CD4-positive, alpha-beta memory T cell (primary cell): ENCODE measurements at regions of chr15 and their contacts with region 1.

Region 1: GRCh38 chr15:74906446-74907162 is at the start of gene FAM219B:
- DNase-seq: peak; percentile 67 to 80 (median 68)
- H3K4me3 ChIP-seq: peak within 1 kb of the TSS; percentile 61 to 94
- H3K4me3 Mint-ChIP-seq: peak within 1 kb of the TSS; percentile 96 to 100 (median 99)
- H3K27ac ChIP-seq: peak within 1 kb of the TSS; percentile 83
- H3K27ac Mint-ChIP-seq: peak within 1 kb of the TSS; percentile 92 to 99 (median 98)
- H3K4me1 ChIP-seq: peaks cover 32% of the 10 kb centered on the region
- H3K4me1 Mint-ChIP-seq: peaks cover 25 to 52% (median 39%) of the 10 kb centered on the region in 4 donors
- H3K27me3 ChIP-seq: no peaks in the 10 kb centered on the region
- H3K27me3 Mint-ChIP-seq: no peaks in the 10 kb centered on the region
- total RNA-seq, gene FAM219B: 101 to 117 TPM

Region 2: DNA sequence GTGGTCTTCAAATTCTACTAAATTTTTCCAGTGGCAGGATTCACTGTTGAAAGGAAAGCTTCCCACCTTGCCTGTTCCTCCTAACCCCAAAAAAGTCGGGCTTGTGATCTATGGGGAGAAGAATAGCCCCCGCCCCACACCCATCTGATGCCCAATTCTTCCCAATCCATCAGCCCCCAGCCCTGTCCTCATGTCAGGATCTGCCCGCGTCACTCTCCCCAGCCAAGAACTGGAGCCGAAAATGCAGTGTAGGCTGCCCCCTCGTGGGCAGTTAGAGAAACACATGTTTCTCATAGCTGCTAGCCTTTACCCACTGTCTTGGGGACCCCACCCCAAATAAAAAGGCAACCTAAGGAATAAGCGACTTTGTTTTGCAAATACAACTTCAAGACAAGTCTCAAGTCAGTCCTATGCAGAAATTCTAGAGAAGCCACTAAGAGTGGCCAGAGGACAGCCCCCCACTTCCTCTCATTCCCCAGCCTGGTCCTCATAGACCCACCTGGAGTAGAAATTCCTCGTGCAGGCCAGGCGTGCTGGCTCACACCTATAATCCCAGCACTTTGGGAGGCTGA is 137.7 kb before region 1 on chr15:
- CTCF ChIA-PET with region 1: interaction called, 77 read pairs
- POLR2A ChIA-PET with region 1: interaction called, 26 read pairs
- intact Hi-C with region 1: loop called (anchors 1 kb)
- DNase-seq: peak; percentile 60 to 67 (median 60)
- H3K4me3 ChIP-seq: no peak overlapping the region
- H3K4me3 Mint-ChIP-seq: peak overlapping the region in 2 of 8 donors; percentile 0 to 30
- H3K27ac ChIP-seq: no peak overlapping the region
- H3K27ac Mint-ChIP-seq: peak overlapping the region in 4 of 7 donors; percentile 7 to 81 (median 19)
- H3K4me1 ChIP-seq: peaks cover 22% of the 10 kb centered on the region
- H3K4me1 Mint-ChIP-seq: peaks cover 8 to 36% (median 16%) of the 10 kb centered on the region in 4 donors
- H3K27me3 ChIP-seq: no peaks in the 10 kb centered on the region
- H3K27me3 Mint-ChIP-seq: peaks cover 3 to 4% of the 10 kb centered on the region in 2 donors

Region 3: DNA sequence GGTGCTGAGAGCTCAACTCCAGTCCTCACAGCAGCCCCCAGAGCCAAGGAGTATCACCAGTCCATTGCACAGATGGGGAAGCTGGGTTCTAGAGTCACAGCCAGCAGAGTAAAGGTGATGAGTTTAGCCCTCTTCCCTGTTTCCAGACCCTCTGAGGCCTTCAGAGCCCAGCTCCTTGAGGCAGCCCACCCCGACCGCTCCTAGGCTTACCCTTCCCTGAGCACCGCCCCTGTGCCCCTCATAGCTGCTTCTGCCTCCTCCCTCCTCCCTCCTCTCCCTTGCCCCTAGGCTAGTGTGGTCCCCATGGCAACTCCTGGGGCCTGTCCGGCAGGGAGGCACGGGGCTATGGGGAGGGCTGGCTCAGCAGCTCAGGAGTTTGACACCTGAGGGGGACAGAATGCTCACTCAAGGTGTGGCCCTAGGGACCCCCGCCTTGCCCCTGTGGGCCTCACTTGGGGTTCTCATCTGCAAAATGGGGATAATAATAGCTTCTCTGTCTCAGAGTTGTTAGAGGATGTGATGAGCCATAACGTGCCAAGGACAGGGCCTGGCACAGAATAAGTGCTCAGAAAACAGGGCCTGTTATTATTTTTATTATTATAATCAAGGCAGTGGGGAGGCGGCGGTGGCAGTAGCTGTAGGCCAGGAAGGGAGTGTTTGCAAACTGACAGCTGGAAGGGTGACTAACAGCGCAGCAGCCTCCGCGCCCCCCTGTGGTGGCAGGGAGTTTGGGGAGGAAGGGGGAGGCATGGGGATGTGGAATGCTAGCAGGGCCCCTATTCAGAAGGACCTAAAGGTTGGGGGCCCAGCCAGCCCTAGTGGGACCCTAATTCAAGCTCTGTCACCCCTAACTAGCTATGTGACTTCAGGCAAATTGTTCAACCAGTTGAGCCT is 113.2 kb before region 1 on chr15:
- CTCF ChIA-PET with region 1: interaction called, 15 read pairs
- POLR2A ChIA-PET with region 1: interaction called, 19 read pairs
- intact Hi-C with region 1: no loop called
- DNase-seq: peak; percentile 70 to 83 (median 75)
- H3K4me3 ChIP-seq: peak overlapping the region; percentile 17 to 24
- H3K4me3 Mint-ChIP-seq: peak overlapping the region; percentile 6 to 96 (median 75)
- H3K27ac ChIP-seq: peak overlapping the region; percentile 56
- H3K27ac Mint-ChIP-seq: peak overlapping the region; percentile 80 to 95 (median 90)
- H3K4me1 ChIP-seq: peaks cover 99% of the 10 kb centered on the region
- H3K4me1 Mint-ChIP-seq: peaks cover 61 to 94% (median 77%) of the 10 kb centered on the region in 4 donors
- H3K27me3 ChIP-seq: no peaks in the 10 kb centered on the region
- H3K27me3 Mint-ChIP-seq: no peaks in the 10 kb centered on the region

Region 4: GRCh38 chr15:74835307-74835823 is 71.2 kb before region 1 on chr15:
- CTCF ChIA-PET with region 1: interaction called, 136 read pairs
- POLR2A ChIA-PET with region 1: interaction called, 106 read pairs
- intact Hi-C with region 1: no loop called
- DNase-seq: peak in 3 of 5 donors; percentile 16 to 38 (median 24)
- H3K4me3 ChIP-seq: no peak overlapping the region
- H3K4me3 Mint-ChIP-seq: no peak overlapping the region
- H3K27ac ChIP-seq: no peak overlapping the region
- H3K27ac Mint-ChIP-seq: peak overlapping the region in 1 of 7 donors; percentile 5
- H3K4me1 ChIP-seq: no peaks in the 10 kb centered on the region
- H3K4me1 Mint-ChIP-seq: peaks cover 0 to 5% (median 3%) of the 10 kb centered on the region in 4 donors
- H3K27me3 ChIP-seq: no peaks in the 10 kb centered on the region
- H3K27me3 Mint-ChIP-seq: no peaks in the 10 kb centered on the region

Region 5: DNA sequence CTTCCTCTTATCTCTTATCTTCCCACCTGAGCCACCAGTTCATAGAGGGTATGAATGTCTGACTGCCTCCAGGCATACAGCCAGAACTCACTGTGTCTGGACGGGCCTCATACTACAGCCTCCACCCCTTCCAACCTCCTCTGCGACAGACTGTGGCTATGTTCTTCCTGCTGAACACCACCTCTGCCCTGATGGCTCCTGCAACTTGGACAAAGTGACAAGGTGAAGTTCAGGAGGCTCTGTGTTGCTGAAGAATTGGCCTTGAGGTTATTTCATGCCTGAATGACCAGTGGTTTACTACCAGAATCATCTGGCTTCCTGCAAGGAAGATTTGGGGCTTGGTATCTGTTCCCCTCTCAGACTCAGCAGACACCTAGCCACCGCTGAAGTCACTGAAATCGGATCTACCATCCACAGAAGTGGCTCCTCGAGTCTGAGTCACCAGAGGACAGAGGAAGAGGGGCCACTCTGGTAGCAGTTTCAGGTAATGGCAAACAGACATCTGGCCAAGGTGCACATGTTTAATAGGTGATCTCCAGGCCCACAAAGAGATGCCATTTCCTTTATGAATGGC is 49.4 kb before region 1 on chr15:
- CTCF ChIA-PET with region 1: interaction called, 11 read pairs
- POLR2A ChIA-PET with region 1: interaction called, 4 read pairs
- intact Hi-C with region 1: no loop called
- DNase-seq: no peak
- H3K4me3 ChIP-seq: no peak overlapping the region
- H3K4me3 Mint-ChIP-seq: peak overlapping the region in 1 of 8 donors; percentile 17
- H3K27ac ChIP-seq: peak overlapping the region; percentile 11
- H3K27ac Mint-ChIP-seq: peak overlapping the region; percentile 74 to 94 (median 80)
- H3K4me1 ChIP-seq: peaks cover 32% of the 10 kb centered on the region
- H3K4me1 Mint-ChIP-seq: peaks cover 18 to 47% (median 30%) of the 10 kb centered on the region in 4 donors
- H3K27me3 ChIP-seq: no peaks in the 10 kb centered on the region
- H3K27me3 Mint-ChIP-seq: no peaks in the 10 kb centered on the region

Region 6: GRCh38 chr15:74884428-74885223 is 22.0 kb before region 1 on chr15:
- CTCF ChIA-PET with region 1: interaction called, 37 read pairs
- POLR2A ChIA-PET with region 1: interaction called, 155 read pairs
- intact Hi-C with region 1: no loop called
- DNase-seq: no peak
- H3K4me3 ChIP-seq: no peak overlapping the region
- H3K4me3 Mint-ChIP-seq: peak overlapping the region in 2 of 8 donors; percentile 17 to 39
- H3K27ac ChIP-seq: no peak overlapping the region
- H3K27ac Mint-ChIP-seq: peak overlapping the region in 1 of 7 donors; percentile 72
- H3K4me1 ChIP-seq: peaks cover 27% of the 10 kb centered on the region
- H3K4me1 Mint-ChIP-seq: peaks cover 12 to 36% (median 20%) of the 10 kb centered on the region in 4 donors
- H3K27me3 ChIP-seq: no peaks in the 10 kb centered on the region
- H3K27me3 Mint-ChIP-seq: no peaks in the 10 kb centered on the region

Region 7: DNA sequence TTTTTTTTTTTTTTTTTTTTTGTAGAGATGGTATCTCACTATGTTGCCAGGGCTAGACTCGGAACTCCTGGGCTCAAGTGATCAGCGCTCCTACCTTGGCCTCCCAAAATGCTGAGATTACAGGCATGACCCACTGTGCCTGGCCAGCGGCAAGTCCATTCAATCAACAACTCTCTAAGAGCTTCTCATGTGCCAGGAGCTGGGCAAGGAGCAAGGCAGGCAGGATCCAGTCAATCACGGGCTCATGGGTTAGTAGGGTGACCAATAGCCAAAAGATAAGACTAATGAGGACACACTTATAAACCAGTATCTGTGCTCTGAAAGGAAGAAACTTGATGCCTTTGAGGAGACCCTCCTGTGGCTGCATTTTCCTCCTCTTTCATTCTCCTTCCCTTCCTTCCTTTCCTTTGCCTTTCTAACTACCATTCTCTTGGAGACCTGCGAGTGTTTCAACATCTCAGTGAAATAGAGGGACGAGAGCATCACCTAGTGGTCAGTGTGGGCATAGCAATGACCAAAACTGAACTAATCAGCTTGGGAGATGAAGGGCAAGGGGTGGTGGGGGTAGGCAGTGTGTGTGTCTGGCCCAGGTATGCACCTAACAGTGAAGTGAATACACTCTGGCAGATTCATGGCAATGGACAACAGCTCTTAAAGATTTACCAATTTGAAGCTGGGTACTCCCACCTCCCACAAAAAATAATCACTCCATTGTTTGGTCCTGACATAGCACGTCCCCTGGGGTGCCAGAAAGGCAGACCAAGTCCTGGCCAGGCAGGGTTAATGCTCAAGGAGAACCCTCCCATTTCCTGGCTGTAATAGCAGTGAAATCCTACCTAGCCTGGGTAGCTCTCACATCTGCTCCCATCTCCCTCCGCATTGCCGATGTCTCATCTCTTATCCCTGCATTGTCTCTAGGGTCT is 43.7 kb after region 1 on chr15:
- CTCF ChIA-PET with region 1: interaction called, 28 read pairs
- POLR2A ChIA-PET with region 1: interaction called, 4 read pairs
- intact Hi-C with region 1: loop called (anchors 5 kb)
- DNase-seq: peak; percentile 70 to 79 (median 75)
- H3K4me3 ChIP-seq: no peak overlapping the region
- H3K4me3 Mint-ChIP-seq: no peak overlapping the region
- H3K27ac ChIP-seq: no peak overlapping the region
- H3K27ac Mint-ChIP-seq: peak overlapping the region in 1 of 7 donors; percentile 1
- H3K4me1 ChIP-seq: peaks cover 6% of the 10 kb centered on the region
- H3K4me1 Mint-ChIP-seq: peaks cover under 1 to 11% (median 3%) of the 10 kb centered on the region in 4 donors
- H3K27me3 ChIP-seq: no peaks in the 10 kb centered on the region
- H3K27me3 Mint-ChIP-seq: peaks cover 2% of the 10 kb centered on the region in 2 donors